Caco-2 (cell line): ENCODE measurements at regions of chr4 and their contacts with region 1.

Region 1: GRCh38 chr4:25439918-25440477 is 62.9 kb downstream of the ANAPC4 start:
- DNase-seq: peak; percentile 53 to 72
- H3K4me3 ChIP-seq: no peak overlapping the region
- H3K4me3 Mint-ChIP-seq: no peak overlapping the region
- H3K27ac Mint-ChIP-seq: no peak overlapping the region
- H3K4me1 ChIP-seq: no peaks in the 10 kb centered on the region
- H3K4me1 Mint-ChIP-seq: peaks cover 6% of the 10 kb centered on the region
- H3K27me3 ChIP-seq: no peaks in the 10 kb centered on the region
- H3K27me3 Mint-ChIP-seq: no peaks in the 10 kb centered on the region
- CTCF ChIP-seq: peak; percentile 72 to 79

Region 2: GRCh38 chr4:25523405-25523804 is 83.4 kb after region 1 on chr4:
- CTCF ChIA-PET with region 1: no interaction called
- POLR2A ChIA-PET with region 1: no interaction called
- intact Hi-C with region 1: loop called (anchors 10 kb)
- DNase-seq: no peak
- H3K4me3 ChIP-seq: no peak overlapping the region
- H3K4me3 Mint-ChIP-seq: no peak overlapping the region
- H3K27ac Mint-ChIP-seq: no peak overlapping the region
- H3K4me1 ChIP-seq: no peaks in the 10 kb centered on the region
- H3K4me1 Mint-ChIP-seq: peaks cover 7% of the 10 kb centered on the region
- H3K27me3 ChIP-seq: no peaks in the 10 kb centered on the region
- H3K27me3 Mint-ChIP-seq: no peaks in the 10 kb centered on the region
- CTCF ChIP-seq: no peak

Region 3: GRCh38 chr4:25552580-25553271 is 112.7 kb after region 1 on chr4:
- CTCF ChIA-PET with region 1: no interaction called
- POLR2A ChIA-PET with region 1: no interaction called
- intact Hi-C with region 1: loop called (anchors 5 kb)
- DNase-seq: no peak
- H3K4me3 ChIP-seq: no peak overlapping the region
- H3K4me3 Mint-ChIP-seq: no peak overlapping the region
- H3K27ac Mint-ChIP-seq: no peak overlapping the region
- H3K4me1 ChIP-seq: no peaks in the 10 kb centered on the region
- H3K4me1 Mint-ChIP-seq: no peaks in the 10 kb centered on the region
- H3K27me3 ChIP-seq: no peaks in the 10 kb centered on the region
- H3K27me3 Mint-ChIP-seq: no peaks in the 10 kb centered on the region
- CTCF ChIP-seq: no peak

Region 4: DNA sequence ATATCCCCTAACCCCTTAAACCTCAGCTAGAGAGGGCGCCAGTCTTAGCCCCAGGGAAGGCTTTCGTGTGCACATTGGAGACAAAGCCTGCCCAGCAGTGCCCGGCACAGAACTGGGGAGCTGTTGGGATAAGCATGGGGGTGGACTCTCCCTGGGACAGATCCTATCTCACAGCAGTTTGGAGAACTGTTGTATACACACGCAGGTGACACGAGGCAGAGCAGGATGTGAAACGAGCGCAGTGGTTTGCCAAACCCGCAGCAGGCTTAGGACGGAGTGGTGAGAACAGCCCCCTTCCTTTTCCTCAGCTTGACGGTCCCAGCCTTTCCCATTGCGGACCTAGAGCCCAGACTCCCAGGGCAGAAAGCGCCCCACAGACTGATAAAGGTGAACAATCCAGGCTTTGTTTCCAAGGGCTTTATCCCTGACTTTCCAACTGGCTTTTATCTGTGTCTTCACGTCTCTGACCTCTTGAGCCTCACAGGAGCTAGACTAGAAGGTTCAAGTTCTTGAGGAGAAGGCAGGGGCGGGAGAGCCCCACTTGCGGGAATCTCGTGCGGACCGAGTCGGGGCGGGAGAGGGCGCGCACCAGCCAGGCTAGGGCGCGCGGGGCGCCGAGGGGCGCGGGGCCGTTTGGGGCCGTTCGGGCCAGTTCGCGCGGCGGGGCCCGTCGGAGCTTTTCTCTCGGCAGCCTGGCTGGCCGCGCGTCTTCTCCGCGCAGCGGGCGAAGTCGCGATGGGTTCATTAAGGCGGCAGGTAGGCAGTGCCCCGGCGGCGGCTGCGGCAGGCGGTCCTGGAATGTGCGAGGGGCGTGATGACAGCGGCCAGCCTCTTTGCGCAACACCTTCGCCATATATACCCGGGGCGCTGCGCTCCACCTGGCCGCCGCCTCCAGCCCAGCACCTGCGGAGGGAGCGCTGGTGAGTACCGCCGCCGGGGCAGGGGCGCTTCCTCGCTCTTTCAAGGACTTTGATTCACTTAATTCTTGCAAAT is 215.3 kb after region 1 on chr4 and contains the start of gene SLC34A2:
- CTCF ChIA-PET with region 1: interaction called, 4 read pairs
- POLR2A ChIA-PET with region 1: no interaction called
- intact Hi-C with region 1: loop called (anchors 5 kb)
- DNase-seq: peak; percentile 78 to 87
- H3K4me3 ChIP-seq: peak within 1 kb of the TSS; percentile 40
- H3K4me3 Mint-ChIP-seq: peak within 1 kb of the TSS; percentile 84
- H3K27ac Mint-ChIP-seq: peak within 1 kb of the TSS; percentile 84
- H3K4me1 ChIP-seq: peaks cover 29% of the 10 kb centered on the region
- H3K4me1 Mint-ChIP-seq: peaks cover 25% of the 10 kb centered on the region
- H3K27me3 ChIP-seq: no peaks in the 10 kb centered on the region
- H3K27me3 Mint-ChIP-seq: no peaks in the 10 kb centered on the region
- CTCF ChIP-seq: peak in 1 of 2 experiments; percentile 25
- total RNA-seq, gene SLC34A2: 13.6 and 19.9 TPM in 2 replicates

Region 5: GRCh38 chr4:25767877-25768725 is 328.1 kb after region 1 on chr4:
- CTCF ChIA-PET with region 1: interaction called, 40 read pairs
- POLR2A ChIA-PET with region 1: no interaction called
- intact Hi-C with region 1: loop called (anchors 1 kb)
- DNase-seq: peak; percentile 55 to 66
- H3K4me3 ChIP-seq: no peak overlapping the region
- H3K4me3 Mint-ChIP-seq: no peak overlapping the region
- H3K27ac Mint-ChIP-seq: no peak overlapping the region
- H3K4me1 ChIP-seq: no peaks in the 10 kb centered on the region
- H3K4me1 Mint-ChIP-seq: no peaks in the 10 kb centered on the region
- H3K27me3 ChIP-seq: no peaks in the 10 kb centered on the region
- H3K27me3 Mint-ChIP-seq: no peaks in the 10 kb centered on the region
- CTCF ChIP-seq: peak; percentile 82 to 90

Region 6: GRCh38 chr4:25792200-25792791 is 352.3 kb after region 1 on chr4:
- CTCF ChIA-PET with region 1: interaction called, 3 read pairs
- POLR2A ChIA-PET with region 1: no interaction called
- intact Hi-C with region 1: loop called (anchors 1 kb)
- DNase-seq: peak; percentile 43 to 59
- H3K4me3 ChIP-seq: no peak overlapping the region
- H3K4me3 Mint-ChIP-seq: no peak overlapping the region
- H3K27ac Mint-ChIP-seq: no peak overlapping the region
- H3K4me1 ChIP-seq: no peaks in the 10 kb centered on the region
- H3K4me1 Mint-ChIP-seq: no peaks in the 10 kb centered on the region
- H3K27me3 ChIP-seq: no peaks in the 10 kb centered on the region
- H3K27me3 Mint-ChIP-seq: no peaks in the 10 kb centered on the region
- CTCF ChIP-seq: peak; percentile 2 to 52

Region 7: GRCh38 chr4:25913851-25914669 is 474.1 kb after region 1 on chr4 and contains the start of gene SMIM20:
- CTCF ChIA-PET with region 1: no interaction called
- POLR2A ChIA-PET with region 1: no interaction called
- intact Hi-C with region 1: loop called (anchors 10 kb)
- DNase-seq: peak; percentile 92 to 93
- H3K4me3 ChIP-seq: peak within 1 kb of the TSS; percentile 76
- H3K4me3 Mint-ChIP-seq: peak within 1 kb of the TSS; percentile 82
- H3K27ac Mint-ChIP-seq: peak within 1 kb of the TSS; percentile 94
- H3K4me1 ChIP-seq: peaks cover 1% of the 10 kb centered on the region; the same call in 1 of the 2 replicates
- H3K4me1 Mint-ChIP-seq: no peaks in the 10 kb centered on the region
- H3K27me3 ChIP-seq: no peaks in the 10 kb centered on the region
- H3K27me3 Mint-ChIP-seq: peaks cover 2% of the 10 kb centered on the region
- CTCF ChIP-seq: no peak
- total RNA-seq, gene SMIM20: 18.5 and 20.1 TPM in 2 replicates